AG04449 (cell line): ENCODE measurements at regions of chr1 and their contacts with region 1.

Region 1: DNA sequence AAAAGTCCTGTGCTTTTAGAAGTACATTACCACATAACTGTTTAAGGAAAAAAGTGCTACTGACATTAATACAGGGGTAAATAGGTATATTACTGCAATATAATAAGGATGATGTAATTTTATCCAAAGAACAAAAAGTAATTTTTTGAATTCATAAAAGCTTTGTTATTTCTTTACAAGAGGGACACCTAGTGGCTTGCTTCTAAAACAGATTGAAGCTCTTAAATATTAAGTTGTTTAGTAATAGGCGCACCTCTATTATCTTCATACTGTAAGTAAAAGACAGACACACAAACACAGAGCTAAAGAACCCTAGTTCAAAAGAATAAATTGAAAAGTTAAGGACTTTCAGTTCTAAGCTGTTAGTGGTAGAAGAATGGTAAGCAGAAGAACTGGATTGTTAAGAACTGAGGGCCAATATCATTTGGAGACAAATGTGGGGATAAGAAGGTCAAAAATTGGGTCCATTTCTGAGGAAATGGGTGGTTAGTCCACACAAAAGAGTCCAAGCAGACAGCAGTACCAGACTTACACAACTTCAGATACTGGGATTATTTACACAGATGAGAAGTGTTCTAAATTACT is 15.4 kb downstream of the ZNHIT6 start:
- DNase-seq: no peak
- H3K4me3 ChIP-seq: no peak overlapping the region
- CTCF ChIP-seq: peak; percentile 1

Region 2: DNA sequence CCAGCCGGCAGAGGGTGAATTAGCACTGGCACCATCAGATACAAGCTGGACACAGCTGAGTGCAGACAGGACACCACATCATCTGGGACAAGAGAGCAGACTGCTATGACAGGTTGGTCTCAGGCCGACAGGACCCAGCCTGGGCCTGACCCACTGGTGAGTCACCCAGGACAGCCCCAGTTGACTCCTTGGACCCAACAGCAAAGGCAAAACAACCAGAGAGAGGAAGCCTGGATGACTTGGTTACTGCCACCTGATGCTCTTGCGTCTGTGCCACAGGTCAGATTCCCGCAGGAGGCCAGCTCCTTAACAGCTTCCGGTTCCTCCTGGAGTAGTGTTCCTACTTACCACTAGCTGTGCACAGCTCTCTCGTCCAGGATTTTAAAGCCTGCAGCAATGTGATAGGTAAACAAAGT is 93.7 kb before region 1 on chr1:
- CTCF ChIA-PET with region 1: interaction called, 36 read pairs
- POLR2A ChIA-PET with region 1: no interaction called
- DNase-seq: no peak
- H3K4me3 ChIP-seq: no peak overlapping the region
- CTCF ChIP-seq: no peak

Region 3: DNA sequence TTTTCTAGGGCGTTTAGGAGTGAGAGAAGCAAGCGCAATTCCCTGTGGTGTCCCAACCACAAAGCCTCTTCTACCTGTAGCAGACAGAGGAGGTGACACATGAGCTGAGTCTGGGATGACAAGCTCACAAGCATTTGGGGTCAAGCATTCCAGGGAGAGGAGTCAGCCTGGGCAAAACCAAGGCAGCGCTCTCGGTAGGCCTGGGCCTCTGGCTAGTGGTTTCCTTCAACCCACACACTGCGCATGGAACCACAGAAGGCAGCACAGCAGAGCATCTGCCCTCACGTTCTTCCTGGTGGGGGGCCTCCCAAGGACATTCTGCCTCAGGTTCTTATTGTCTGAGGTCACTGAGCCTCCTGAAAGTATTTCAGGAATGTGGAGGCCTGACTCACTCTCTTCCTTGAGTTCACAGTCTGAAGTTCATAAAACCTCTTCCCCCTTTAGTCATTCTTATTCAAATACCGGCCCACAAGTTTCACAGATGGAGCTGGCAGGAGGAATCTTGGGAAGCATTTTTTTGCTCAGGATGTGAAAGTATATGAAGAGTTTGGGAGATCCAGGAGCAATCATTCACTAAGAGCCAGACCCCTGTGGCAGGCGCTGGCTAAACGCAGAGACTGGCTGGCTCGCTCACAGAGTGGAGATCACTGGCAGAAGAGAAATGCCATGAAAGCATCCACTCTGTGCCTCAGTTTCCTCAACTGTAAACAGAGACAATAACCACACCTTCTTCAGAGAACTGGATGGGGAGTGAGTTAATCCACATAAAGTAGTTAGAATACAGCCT is 85.5 kb before region 1 on chr1:
- CTCF ChIA-PET with region 1: interaction called, 48 read pairs
- POLR2A ChIA-PET with region 1: interaction called, 11 read pairs
- DNase-seq: peak; percentile 100
- H3K4me3 ChIP-seq: no peak overlapping the region
- CTCF ChIP-seq: no peak

Region 4: DNA sequence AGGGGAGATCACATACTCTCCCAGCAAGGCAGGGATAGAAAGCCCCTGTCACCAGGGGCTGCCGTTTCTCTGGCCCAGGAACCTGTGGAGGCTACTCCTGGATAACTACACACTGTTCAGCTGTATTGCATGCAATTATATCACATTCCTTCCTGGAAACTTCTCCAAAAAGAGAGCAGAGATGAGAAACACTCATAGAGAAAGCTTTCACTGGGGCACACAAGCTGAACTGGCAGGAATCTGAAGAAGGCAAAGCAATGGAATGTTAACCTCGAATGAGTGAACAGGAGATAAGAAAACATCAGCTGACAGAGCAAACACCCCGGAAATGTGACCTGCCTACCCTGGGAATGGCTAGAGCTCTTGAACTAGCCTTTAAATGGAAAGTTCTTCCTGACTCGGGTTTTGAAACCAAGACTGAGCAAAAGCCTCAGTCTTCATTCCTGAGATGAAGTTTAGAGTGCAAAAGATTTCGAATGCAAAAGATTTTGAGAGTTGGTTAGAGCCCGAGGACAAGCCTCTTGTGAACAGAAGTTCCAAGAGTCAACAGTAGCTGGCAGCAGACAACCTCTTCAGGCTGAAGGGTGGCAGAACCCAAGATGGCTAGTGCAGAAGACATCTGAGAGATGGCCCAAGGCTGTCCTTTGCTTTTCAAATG is 80.0 kb before region 1 on chr1:
- CTCF ChIA-PET with region 1: interaction called, 48 read pairs
- POLR2A ChIA-PET with region 1: interaction called, 11 read pairs
- DNase-seq: peak; percentile 97
- H3K4me3 ChIP-seq: no peak overlapping the region
- CTCF ChIP-seq: peak; percentile 58

Region 5: GRCh38 chr1:85628791-85629531 is 63.9 kb before region 1 on chr1:
- CTCF ChIA-PET with region 1: interaction called, 20 read pairs
- POLR2A ChIA-PET with region 1: interaction called, 5 read pairs
- DNase-seq: peak; percentile 92
- H3K4me3 ChIP-seq: peak overlapping the region; percentile 46
- CTCF ChIP-seq: no peak

Region 6: DNA sequence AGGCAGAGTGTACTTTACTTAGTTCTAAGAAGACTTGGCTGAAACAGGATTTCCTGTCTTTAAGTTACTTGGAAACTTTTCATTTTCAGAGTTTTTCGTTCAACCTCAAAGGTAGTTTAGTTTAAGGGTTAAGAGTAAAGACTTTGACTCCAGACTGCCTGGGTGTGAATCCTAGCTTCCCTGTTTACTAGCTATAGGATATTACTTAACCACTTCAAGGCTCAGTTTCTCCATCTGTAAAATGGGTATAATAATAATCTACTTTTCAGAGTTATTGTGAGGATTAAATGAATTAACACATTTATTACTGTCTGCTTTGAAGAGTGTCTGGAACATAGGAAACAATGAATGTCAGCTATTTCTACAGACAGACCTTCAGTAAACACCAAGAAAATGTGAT is 14.6 kb before region 1 on chr1:
- CTCF ChIA-PET with region 1: interaction called, 26 read pairs
- POLR2A ChIA-PET with region 1: no interaction called
- DNase-seq: no peak
- H3K4me3 ChIP-seq: no peak overlapping the region
- CTCF ChIP-seq: no peak

Region 7: GRCh38 chr1:85707990-85708828 is 15.4 kb after region 1 on chr1 and contains the start of gene ZNHIT6:
- CTCF ChIA-PET with region 1: interaction called, 69 read pairs
- POLR2A ChIA-PET with region 1: interaction called, 3 read pairs
- DNase-seq: peak; percentile 86
- H3K4me3 ChIP-seq: peak within 1 kb of the TSS; percentile 90
- CTCF ChIP-seq: peak; percentile 29

Region 8: GRCh38 chr1:85824066-85824830 is 131.4 kb after region 1 on chr1:
- CTCF ChIA-PET with region 1: no interaction called
- POLR2A ChIA-PET with region 1: no interaction called
- DNase-seq: no peak
- H3K4me3 ChIP-seq: no peak overlapping the region
- CTCF ChIP-seq: no peak

Region 9: GRCh38 chr1:86018283-86018923 is 325.6 kb after region 1 on chr1:
- CTCF ChIA-PET with region 1: no interaction called
- POLR2A ChIA-PET with region 1: no interaction called
- DNase-seq: no peak
- H3K4me3 ChIP-seq: no peak overlapping the region
- CTCF ChIP-seq: peak; percentile 59